Activated T-helper 2 cell treated with anti-CD3 and anti-CD28 coated beads, Interferon-gamma antibody, Interleukin-2, Interleukin-4, amounts not matched to agents 10 μg/mL and 5 μg/mL and 100 μg/mL, durations not matched to agents 14 hours and 24 hours and 36 hours (primary cell): ENCODE measurements at regions of chr11 and their contacts with region 1.

Region 1: GRCh38 chr11:72722050-72722748 is 30.0 kb downstream of the ARAP1 start:
- DNase-seq: peak; percentile 81
- H3K4me3 Mint-ChIP-seq: peak overlapping the region; percentile 90
- H3K27ac Mint-ChIP-seq: peak overlapping the region; percentile 86
- H3K4me1 Mint-ChIP-seq: peaks cover 32% of the 10 kb centered on the region
- H3K27me3 Mint-ChIP-seq: no peaks in the 10 kb centered on the region

Region 2: DNA sequence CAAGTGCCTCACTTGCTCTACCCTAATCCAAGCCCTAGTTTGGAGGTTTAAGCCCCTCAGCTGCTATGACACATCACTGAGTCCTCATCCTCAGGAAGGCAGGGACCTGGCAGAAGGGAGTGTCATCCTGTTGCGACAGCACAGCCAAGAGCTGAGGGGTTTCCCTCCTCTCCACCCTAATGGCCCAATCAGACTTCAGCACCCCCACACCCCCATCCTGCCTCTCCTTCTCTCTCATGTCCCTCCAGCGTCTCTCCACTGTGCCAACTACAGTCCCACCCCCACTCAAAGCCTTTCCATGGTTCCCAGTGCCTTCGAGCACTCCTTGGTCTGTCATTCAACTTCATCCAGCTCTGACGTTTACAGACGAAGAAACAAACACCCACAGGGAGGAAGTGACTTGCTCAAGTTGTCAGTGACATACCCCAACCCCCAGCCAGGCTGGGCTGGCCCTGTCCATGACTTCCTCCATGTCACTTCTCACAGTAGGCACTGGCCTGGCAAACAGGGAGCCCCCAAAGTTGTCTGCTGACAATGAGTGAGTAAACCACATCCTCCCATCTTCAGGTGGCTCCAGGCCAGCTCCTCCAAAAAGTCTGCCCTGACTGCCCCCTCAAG is 14.4 kb after region 1 on chr11:
- intact Hi-C with region 1: loop called (anchors 1 kb)
- DNase-seq: peak; percentile 54
- H3K4me3 Mint-ChIP-seq: peak overlapping the region; percentile 49
- H3K27ac Mint-ChIP-seq: peak overlapping the region; percentile 95
- H3K4me1 Mint-ChIP-seq: peaks cover 45% of the 10 kb centered on the region
- H3K27me3 Mint-ChIP-seq: no peaks in the 10 kb centered on the region

Region 3: GRCh38 chr11:72793425-72794367 is 71.5 kb after region 1 on chr11 and contains the start of gene STARD10:
- intact Hi-C with region 1: loop called (anchors 1 kb)
- DNase-seq: peak; percentile 93
- H3K4me3 Mint-ChIP-seq: peak within 1 kb of the TSS; percentile 96
- H3K27ac Mint-ChIP-seq: peak within 1 kb of the TSS; percentile 100
- H3K4me1 Mint-ChIP-seq: peaks cover 21% of the 10 kb centered on the region
- H3K27me3 Mint-ChIP-seq: no peaks in the 10 kb centered on the region
- total RNA-seq, gene STARD10: 10.7 and 16.0 TPM in 2 replicates

Region 4: DNA sequence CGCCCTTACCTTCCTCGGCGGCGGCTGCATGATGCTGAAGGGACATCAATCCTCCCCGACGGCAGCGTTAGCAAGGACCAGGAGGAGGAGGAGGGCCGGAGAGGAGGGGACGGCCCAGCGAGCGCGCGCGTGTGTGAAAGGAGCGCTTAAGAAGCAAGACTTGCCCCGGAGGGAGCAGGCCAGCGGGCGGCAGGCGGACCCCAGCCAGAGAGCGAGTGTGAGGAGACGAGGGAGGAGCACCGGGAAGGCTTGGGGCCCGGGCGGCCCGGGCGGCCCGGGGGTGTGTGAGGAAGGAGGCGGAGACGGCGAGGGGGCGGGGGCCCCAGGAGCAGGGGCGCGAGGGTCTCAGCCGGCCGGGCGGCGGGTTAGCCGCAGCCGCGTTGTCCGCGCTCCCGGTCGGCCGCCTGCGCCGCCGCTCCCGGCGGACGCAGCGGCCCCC is 419.7 kb after region 1 on chr11:
- intact Hi-C with region 1: loop called (anchors 10 kb)
- DNase-seq: no peak
- H3K4me3 Mint-ChIP-seq: peak overlapping the region; percentile 99
- H3K27ac Mint-ChIP-seq: peak overlapping the region; percentile 96
- H3K4me1 Mint-ChIP-seq: peaks cover 33% of the 10 kb centered on the region
- H3K27me3 Mint-ChIP-seq: no peaks in the 10 kb centered on the region

Region 5: GRCh38 chr11:73177778-73178577 is 455.8 kb after region 1 on chr11:
- intact Hi-C with region 1: loop called (anchors 1 kb)
- DNase-seq: peak; percentile 67
- H3K4me3 Mint-ChIP-seq: no peak overlapping the region
- H3K27ac Mint-ChIP-seq: no peak overlapping the region
- H3K4me1 Mint-ChIP-seq: peaks cover 13% of the 10 kb centered on the region
- H3K27me3 Mint-ChIP-seq: peaks cover 16% of the 10 kb centered on the region